ENCODE measurements at regions of chr3 and their contacts with region 1.

Region 1: GRCh38 chr3:129534428-129535027 is 6.1 kb downstream of the RHO start:
- DNase-seq: peak; percentile 62
- ATAC-seq: peak; percentile 60
- H3K4me3 ChIP-seq: peak overlapping the region; percentile 3 to 59 (median 30); a peak in 5 of 6 replicates
- H3K27ac ChIP-seq: peak overlapping the region; percentile 66
- H3K4me1 ChIP-seq: peaks cover 79% of the 10 kb centered on the region
- H3K27me3 ChIP-seq: no peaks in the 10 kb centered on the region
- CTCF ChIP-seq: no peak
- EP300 ChIP-seq: peak in 1 of 2 experiments; percentile 21; a peak in 1 of 4 replicates
- POLR2A ChIP-seq: no peak
- RAD21 ChIP-seq: no peak

Region 2: GRCh38 chr3:129549412-129550204 is 15.1 kb after region 1 on chr3:
- CTCF ChIA-PET with region 1: no interaction called
- POLR2A ChIA-PET with region 1: interaction called, 11 read pairs
- in situ Hi-C with region 1: no loop called
- intact Hi-C with region 1: no loop called
- DNase-seq: no peak
- ATAC-seq: no peak
- H3K4me3 ChIP-seq: no peak overlapping the region
- H3K27ac ChIP-seq: no peak overlapping the region
- H3K4me1 ChIP-seq: peaks cover 56% of the 10 kb centered on the region
- H3K27me3 ChIP-seq: 0 out of 5 replicates have a peak, but pooled peaks cover 0 to under 1% of the 10 kb centered on the region in 2 experiments
- CTCF ChIP-seq: no peak
- EP300 ChIP-seq: no peak
- POLR2A ChIP-seq: no peak
- RAD21 ChIP-seq: no peak

Region 3: DNA sequence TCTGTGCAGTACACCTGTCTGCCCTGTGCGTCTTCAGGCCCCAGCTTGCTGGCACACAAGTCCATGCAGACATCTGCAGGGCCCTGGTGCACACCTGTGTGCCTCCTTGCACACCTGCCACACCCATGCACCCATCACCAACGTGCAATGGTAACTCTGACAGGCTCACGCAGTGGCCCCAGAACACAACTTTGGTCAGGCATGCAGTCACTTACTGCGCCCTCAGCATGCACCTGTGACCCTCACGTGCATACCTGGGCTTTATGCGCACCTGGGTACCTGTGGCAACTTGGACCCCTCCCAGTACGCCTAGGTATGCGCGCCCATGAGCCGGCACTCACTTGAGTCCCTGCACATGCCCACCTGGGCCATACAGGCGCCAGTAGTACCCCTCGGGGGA is 70.2 kb after region 1 on chr3:
- CTCF ChIA-PET with region 1: no interaction called
- POLR2A ChIA-PET with region 1: no interaction called
- in situ Hi-C with region 1: no loop called
- intact Hi-C with region 1: no loop called
- DNase-seq: no peak
- ATAC-seq: no peak
- H3K4me3 ChIP-seq: peak overlapping the region; percentile 61 to 92 (median 91)
- H3K27ac ChIP-seq: no peak overlapping the region
- H3K4me1 ChIP-seq: peaks cover 74% of the 10 kb centered on the region
- H3K27me3 ChIP-seq: no peaks in the 10 kb centered on the region; a peak in 1 of 5 replicates
- CTCF ChIP-seq: no peak
- EP300 ChIP-seq: no peak
- POLR2A ChIP-seq: no peak
- RAD21 ChIP-seq: no peak

Region 4: GRCh38 chr3:129708328-129708861 is 173.9 kb after region 1 on chr3:
- CTCF ChIA-PET with region 1: no interaction called
- POLR2A ChIA-PET with region 1: no interaction called
- in situ Hi-C with region 1: no loop called
- intact Hi-C with region 1: no loop called
- DNase-seq: no peak
- ATAC-seq: no peak
- H3K4me3 ChIP-seq: no peak overlapping the region
- H3K27ac ChIP-seq: no peak overlapping the region
- H3K4me1 ChIP-seq: no peaks in the 10 kb centered on the region; the same call in 1 of the 2 replicates
- H3K27me3 ChIP-seq: no peaks in the 10 kb centered on the region
- CTCF ChIP-seq: no peak
- EP300 ChIP-seq: no peak
- POLR2A ChIP-seq: no peak
- RAD21 ChIP-seq: no peak